ENCODE measurements at regions of chr10 and their contacts with region 1.

Region 1: GRCh38 chr10:79310911-79311573 is 36.2 kb upstream of the PPIF start:
- DNase-seq: no peak
- ATAC-seq: peak; percentile 20
- H3K4me3 Mint-ChIP-seq: no peak overlapping the region
- H3K27ac Mint-ChIP-seq: no peak overlapping the region
- H3K4me1 Mint-ChIP-seq: peaks cover 7% of the 10 kb centered on the region
- H3K27me3 Mint-ChIP-seq: no peaks in the 10 kb centered on the region

Region 2: GRCh38 chr10:79093658-79094411 is 217.2 kb before region 1 on chr10:
- CTCF ChIA-PET with region 1: no interaction called
- POLR2A ChIA-PET with region 1: no interaction called
- intact Hi-C with region 1: no loop called
- DNase-seq: no peak
- ATAC-seq: peak; percentile 40
- H3K4me3 Mint-ChIP-seq: no peak overlapping the region
- H3K27ac Mint-ChIP-seq: peak overlapping the region; percentile 13
- H3K4me1 Mint-ChIP-seq: peaks cover 19% of the 10 kb centered on the region
- H3K27me3 Mint-ChIP-seq: no peaks in the 10 kb centered on the region

Region 3: DNA sequence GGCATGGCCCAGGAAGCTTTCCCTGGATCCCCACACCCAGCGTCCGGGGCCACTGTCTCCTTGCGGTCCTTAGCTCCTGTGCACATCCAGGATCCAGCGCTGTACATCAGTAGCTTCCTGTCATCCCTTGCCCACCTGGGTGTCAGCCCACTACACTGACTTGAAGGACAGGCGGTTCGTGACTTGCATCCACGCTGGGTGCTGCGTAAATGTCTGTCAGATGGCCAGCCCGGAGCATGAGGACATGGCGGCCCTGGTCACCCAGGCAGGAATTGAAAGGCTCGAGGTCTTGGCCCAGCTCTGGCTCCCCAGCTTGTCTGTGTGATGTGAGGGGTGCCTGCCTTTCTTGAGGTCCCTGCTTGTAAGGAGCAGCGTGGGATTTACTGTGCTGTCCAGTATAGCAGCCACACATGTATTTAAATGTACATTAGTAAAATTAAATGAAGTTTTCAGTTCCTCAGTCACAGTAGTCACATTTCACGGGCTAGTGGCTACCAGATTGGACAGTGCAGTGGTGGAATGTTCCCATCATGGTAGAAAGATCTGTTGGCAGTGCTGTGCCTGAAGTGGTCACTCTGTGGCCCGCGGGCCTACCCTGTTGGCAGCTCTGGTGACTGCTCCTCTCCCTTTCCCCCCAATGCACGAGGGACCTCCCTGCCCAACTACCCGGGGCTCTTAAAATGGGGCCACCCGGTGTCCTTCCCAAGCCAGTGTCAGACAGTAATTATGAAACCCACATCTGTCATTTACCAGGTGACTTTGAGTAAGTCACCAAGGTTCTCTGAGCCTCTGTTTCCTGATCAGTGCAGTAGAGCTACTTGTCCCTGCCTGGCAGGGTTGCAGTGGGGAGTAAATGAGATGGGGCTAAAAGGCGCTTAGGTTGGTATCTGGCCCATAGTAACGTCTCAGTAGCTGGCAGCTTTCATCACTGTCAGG is 61.6 kb before region 1 on chr10:
- CTCF ChIA-PET with region 1: no interaction called
- POLR2A ChIA-PET with region 1: no interaction called
- intact Hi-C with region 1: loop called (anchors 1 to 2 kb)
- DNase-seq: peak; percentile 60
- ATAC-seq: peak; percentile 82
- H3K4me3 Mint-ChIP-seq: peak overlapping the region; percentile 28
- H3K27ac Mint-ChIP-seq: peak overlapping the region; percentile 80
- H3K4me1 Mint-ChIP-seq: peaks cover 67% of the 10 kb centered on the region
- H3K27me3 Mint-ChIP-seq: no peaks in the 10 kb centered on the region

Region 4: GRCh38 chr10:79343121-79343561 is 32.1 kb after region 1 on chr10:
- CTCF ChIA-PET with region 1: no interaction called
- POLR2A ChIA-PET with region 1: no interaction called
- intact Hi-C with region 1: no loop called
- DNase-seq: no peak
- ATAC-seq: no peak
- H3K4me3 Mint-ChIP-seq: no peak overlapping the region
- H3K27ac Mint-ChIP-seq: no peak overlapping the region
- H3K4me1 Mint-ChIP-seq: peaks cover 1% of the 10 kb centered on the region
- H3K27me3 Mint-ChIP-seq: no peaks in the 10 kb centered on the region

Measured in activated CD4-positive, alpha-beta T cell treated with anti-CD3 and anti-CD28 coated beads for 36 hours (primary cell).